H1 (cell line): ENCODE measurements at regions of chr22 and their contacts with region 1.

Region 1: DNA sequence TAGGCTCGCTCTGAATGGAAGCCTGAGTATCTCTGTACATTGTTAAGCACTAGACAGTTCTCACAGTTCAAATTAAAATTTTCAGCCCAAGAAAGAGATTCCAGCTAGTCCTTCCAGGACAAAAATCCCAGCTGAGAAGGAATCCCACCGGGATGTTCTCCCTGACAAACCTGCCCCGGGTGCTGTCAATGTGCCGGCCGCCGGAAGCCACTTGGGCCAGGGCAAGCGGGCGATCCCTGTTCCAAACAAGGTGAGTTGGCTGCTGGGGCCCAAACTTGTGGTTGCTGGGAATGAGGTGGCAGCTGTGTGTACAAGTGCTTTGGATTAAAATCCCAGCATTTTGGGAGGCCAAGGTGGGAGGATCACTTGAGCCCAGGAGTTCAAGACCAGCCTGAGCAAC is 15.4 kb downstream of the GTSE1 start:
- DNase-seq: no peak
- H3K4me3 ChIP-seq: no peak overlapping the region
- H3K27ac ChIP-seq: no peak overlapping the region
- H3K4me1 ChIP-seq: no peaks in the 10 kb centered on the region
- H3K27me3 ChIP-seq: no peaks in the 10 kb centered on the region
- CTCF ChIP-seq: no peak
- EP300 ChIP-seq: no peak
- POLR2A ChIP-seq: no peak
- RAD21 ChIP-seq: no peak

Region 2: GRCh38 chr22:46122511-46122971 is 189.5 kb before region 1 on chr22:
- CTCF ChIA-PET with region 1: interaction called, 30 read pairs
- POLR2A ChIA-PET with region 1: no interaction called
- DNase-seq: peak in 1 of 2 experiments; percentile 90
- H3K4me3 ChIP-seq: no peak overlapping the region
- H3K27ac ChIP-seq: no peak overlapping the region
- H3K4me1 ChIP-seq: peaks cover 0 to 3% (median 0%) of the 10 kb centered on the region in 4 experiments; a peak in 3 of 7 replicates
- H3K27me3 ChIP-seq: peaks cover 0 to 6% (median 0%) of the 10 kb centered on the region in 4 experiments; a peak in 2 of 7 replicates
- CTCF ChIP-seq: peak; percentile 84 to 93 (median 86)
- EP300 ChIP-seq: no peak
- POLR2A ChIP-seq: no peak
- RAD21 ChIP-seq: peak; percentile 81 to 82

Region 3: DNA sequence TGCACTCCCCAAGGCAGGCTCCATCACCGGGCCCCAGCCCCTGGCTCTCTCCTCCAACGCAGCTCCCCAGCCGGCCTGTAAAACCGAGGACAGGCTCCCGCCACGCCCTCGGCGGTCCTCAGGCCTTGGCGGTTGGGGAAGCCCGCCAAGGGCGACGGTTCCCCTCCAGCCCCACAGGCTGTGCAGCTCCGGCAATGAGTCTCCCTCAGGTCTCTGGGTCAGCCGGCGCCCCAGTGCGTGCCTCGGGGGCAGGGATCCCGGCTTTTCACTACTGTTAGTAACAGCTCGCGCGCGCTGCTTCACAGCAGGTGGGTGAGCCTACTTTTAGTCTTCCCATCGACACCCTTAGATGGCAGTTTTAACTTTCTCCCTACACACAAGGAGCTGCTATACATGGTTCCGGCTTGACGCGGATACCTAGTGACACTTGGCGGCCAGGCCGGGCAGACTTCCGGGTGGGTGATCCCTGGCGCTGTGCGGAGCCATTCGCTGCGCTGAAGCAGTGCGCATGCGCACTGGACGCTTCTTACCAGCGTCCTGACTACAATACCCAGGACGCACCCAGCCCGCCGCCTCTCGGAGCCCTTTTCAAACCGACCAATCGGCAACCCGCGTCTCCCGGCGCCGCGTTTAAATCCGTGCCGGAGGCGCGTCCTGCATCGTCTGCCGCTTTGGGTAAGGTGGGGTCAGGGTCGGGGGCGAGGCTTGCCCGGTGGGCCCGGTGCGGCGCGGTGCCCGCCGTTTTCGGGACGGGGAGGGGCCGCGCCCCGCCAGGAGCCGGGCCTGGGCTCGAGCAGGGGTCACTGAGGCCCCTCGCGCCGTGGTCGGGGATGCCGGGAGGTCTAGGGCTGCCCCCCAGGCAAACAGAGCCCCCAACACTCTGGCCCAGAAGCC is 15.6 kb before region 1 on chr22 and contains the start of gene GTSE1:
- CTCF ChIA-PET with region 1: interaction called, 3 read pairs
- POLR2A ChIA-PET with region 1: interaction called, 10 read pairs
- DNase-seq: peak; percentile 93 to 96
- H3K4me3 ChIP-seq: peak within 1 kb of the TSS; percentile 60 to 87 (median 76)
- H3K27ac ChIP-seq: no peak within 1 kb of the TSS; the same call in 1 of the 2 replicates
- H3K4me1 ChIP-seq: peaks cover 4 to 11% (median 5%) of the 10 kb centered on the region in 4 experiments; a peak in 4 of 7 replicates
- H3K27me3 ChIP-seq: no peaks in the 10 kb centered on the region
- CTCF ChIP-seq: peak in 2 of 3 experiments; percentile 1 to 7; a peak in 2 of 4 replicates
- EP300 ChIP-seq: no peak
- POLR2A ChIP-seq: no peak
- RAD21 ChIP-seq: peak; percentile 25 to 32; a peak in 3 of 4 replicates
- total RNA-seq, gene GTSE1: 38.6 and 40.6 TPM in 2 replicates

Region 4: GRCh38 chr22:46355371-46355995 is 43.4 kb after region 1 on chr22:
- CTCF ChIA-PET with region 1: no interaction called
- POLR2A ChIA-PET with region 1: no interaction called
- DNase-seq: peak in 1 of 2 experiments; percentile 97
- H3K4me3 ChIP-seq: no peak overlapping the region
- H3K27ac ChIP-seq: 0 out of 2 replicates have a peak overlapping the region, but pooled peaks have one; percentile 35
- H3K4me1 ChIP-seq: no peaks in the 10 kb centered on the region
- H3K27me3 ChIP-seq: no peaks in the 10 kb centered on the region
- CTCF ChIP-seq: peak; percentile 91 to 95 (median 92)
- EP300 ChIP-seq: no peak
- POLR2A ChIP-seq: no peak
- RAD21 ChIP-seq: peak; percentile 95 to 98